ENCODE measurements at regions of chr4 and their contacts with region 1.

Region 1: DNA sequence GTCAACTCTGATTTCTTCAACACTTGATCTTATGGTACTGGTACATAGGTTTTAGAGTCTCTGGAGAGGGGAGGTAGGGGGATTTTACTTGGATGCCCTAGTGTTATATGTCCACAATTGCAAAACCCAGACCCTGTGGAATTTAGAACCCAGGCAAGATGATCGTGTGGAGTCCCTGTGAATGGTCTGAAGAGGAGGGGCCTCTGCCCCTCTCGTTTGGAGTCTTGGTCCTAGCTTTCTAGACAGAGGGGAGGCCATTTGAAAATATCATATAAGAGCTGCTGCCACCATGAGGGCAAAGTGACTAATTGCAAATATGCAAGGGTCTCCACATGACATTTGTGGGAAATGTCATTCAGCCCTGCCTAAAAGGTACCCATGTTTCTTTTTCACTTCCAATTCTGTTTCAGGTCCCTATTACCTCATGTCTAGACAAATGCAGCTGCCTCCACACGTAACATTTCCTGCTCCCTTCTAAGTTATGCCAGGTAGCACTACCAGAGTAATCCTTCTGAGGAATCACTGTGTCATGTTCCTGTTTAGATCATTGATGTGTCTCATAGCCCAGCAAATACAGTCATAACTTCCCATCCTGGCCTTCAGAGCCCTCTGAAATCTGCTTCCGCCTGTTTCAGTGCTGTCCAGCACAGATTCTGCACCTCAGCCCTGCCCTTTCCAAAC is 126.8 kb downstream of the KLHL8 start:
- DNase-seq: peak in 4 of 5 donors; percentile 5 to 58 (median 39)
- H3K4me3 ChIP-seq: no peak overlapping the region
- H3K4me3 Mint-ChIP-seq: no peak overlapping the region
- H3K27ac ChIP-seq: no peak overlapping the region
- H3K27ac Mint-ChIP-seq: peak overlapping the region; percentile 11 to 82 (median 30)
- H3K4me1 ChIP-seq: peaks cover 4% of the 10 kb centered on the region
- H3K4me1 Mint-ChIP-seq: peaks cover 8 to 18% (median 16%) of the 10 kb centered on the region in 3 donors
- H3K27me3 ChIP-seq: no peaks in the 10 kb centered on the region
- H3K27me3 Mint-ChIP-seq: no peaks in the 10 kb centered on the region

Region 2: GRCh38 chr4:86934771-86935565 is 158.6 kb before region 1 on chr4 and contains the start of gene AFF1:
- CTCF ChIA-PET with region 1: interaction called, 17 read pairs
- POLR2A ChIA-PET with region 1: no interaction called
- DNase-seq: peak; percentile 85 to 92 (median 88)
- H3K4me3 ChIP-seq: peak within 1 kb of the TSS; percentile 95
- H3K4me3 Mint-ChIP-seq: peak within 1 kb of the TSS; percentile 92 to 96 (median 93)
- H3K27ac ChIP-seq: peak within 1 kb of the TSS; percentile 83
- H3K27ac Mint-ChIP-seq: peak within 1 kb of the TSS; percentile 90 to 98 (median 97)
- H3K4me1 ChIP-seq: peaks cover 45% of the 10 kb centered on the region
- H3K4me1 Mint-ChIP-seq: peaks cover 48 to 56% (median 54%) of the 10 kb centered on the region in 3 donors
- H3K27me3 ChIP-seq: no peaks in the 10 kb centered on the region
- H3K27me3 Mint-ChIP-seq: no peaks in the 10 kb centered on the region
- total RNA-seq, gene AFF1: 29.7 to 32.9 TPM

Region 3: DNA sequence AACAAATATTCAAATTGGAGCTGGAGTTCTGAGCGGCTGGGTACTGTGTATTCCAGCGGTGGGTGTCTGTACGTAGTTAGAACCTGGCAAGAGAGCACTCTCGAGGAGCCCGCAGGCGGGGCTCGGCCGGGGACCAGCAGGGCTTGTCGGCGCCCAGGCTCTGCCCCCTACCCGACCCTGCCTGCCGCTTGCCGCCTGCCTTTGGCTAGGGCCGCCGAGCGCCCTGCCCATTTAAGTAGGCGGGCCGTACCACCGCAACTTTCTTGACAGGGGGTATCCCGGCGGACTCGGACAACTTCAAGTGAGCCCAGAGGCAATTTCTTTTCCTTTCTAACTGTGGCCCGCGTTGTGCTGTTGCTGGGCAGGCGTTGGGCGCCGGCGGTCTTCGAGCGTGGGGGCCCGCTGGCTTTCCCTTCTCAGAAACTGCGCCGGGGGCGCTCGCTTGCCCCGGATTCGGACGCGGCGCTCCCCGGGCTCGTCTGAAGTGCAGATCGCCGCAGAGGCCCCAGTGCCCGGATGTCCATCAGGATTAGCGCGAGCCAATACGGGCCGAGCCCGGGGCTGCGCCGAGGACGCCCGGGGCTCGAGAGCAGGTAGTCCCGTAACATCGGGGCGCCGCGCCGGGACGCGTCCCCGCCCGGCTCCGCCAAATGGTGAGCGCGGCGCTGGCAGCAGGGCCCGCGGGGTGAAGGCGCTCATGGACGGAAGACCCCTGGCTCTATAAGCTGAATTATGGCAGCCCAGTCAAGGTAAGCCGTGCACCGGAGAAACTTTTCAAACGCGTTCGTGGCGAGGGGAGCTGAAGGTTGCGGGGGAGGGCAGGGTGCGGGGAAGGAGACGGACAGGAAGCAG is 86.7 kb before region 1 on chr4:
- CTCF ChIA-PET with region 1: interaction called, 16 read pairs
- POLR2A ChIA-PET with region 1: no interaction called
- DNase-seq: peak; percentile 81 to 92 (median 89)
- H3K4me3 ChIP-seq: peak overlapping the region; percentile 94
- H3K4me3 Mint-ChIP-seq: peak overlapping the region; percentile 92 to 95 (median 93)
- H3K27ac ChIP-seq: peak overlapping the region; percentile 85
- H3K27ac Mint-ChIP-seq: peak overlapping the region; percentile 94 to 100 (median 98)
- H3K4me1 ChIP-seq: peaks cover 53% of the 10 kb centered on the region
- H3K4me1 Mint-ChIP-seq: peaks cover 52 to 65% (median 63%) of the 10 kb centered on the region in 3 donors
- H3K27me3 ChIP-seq: no peaks in the 10 kb centered on the region
- H3K27me3 Mint-ChIP-seq: no peaks in the 10 kb centered on the region